Heart left ventricle (tissue), 16 donors: ENCODE measurements at regions of chr2 and their contacts with region 1.

Region 1: DNA sequence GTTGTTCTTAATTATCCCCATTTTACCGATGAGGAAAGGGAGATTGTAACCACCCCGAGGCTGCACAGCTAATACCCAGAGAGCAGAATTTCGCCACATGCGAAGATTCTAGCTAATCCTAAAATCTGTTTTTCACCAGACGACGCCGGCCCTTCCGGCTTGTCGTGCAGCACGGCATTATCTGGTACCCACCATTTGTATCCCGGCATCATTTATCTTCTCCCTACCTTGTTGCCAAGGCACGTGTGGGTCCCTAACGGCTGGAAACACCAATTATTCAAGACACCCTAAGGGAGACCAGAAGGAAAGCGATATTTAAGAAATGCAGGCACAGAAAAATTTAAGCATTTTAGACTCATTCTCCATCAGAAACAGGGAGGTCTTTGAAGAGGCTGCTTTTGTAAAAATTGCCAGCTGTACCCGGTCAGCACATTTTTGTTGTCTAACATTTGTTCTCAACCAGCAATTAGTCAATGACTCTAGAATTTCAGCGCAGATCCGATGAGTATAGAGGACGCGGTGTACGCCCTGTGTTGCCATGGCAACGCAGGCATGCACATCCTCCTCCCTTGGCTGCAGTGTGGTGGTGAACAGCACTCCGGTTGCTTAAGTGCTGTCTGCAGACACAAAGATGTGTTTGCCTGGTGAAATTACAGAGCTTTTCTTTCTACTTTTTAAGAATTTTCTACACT is 111.6 kb downstream of the AGAP1 start:
- DNase-seq: peak; percentile 67 to 90 (median 82)
- ATAC-seq: peak; percentile 81 to 90 (median 88)
- H3K4me3 ChIP-seq: peak overlapping the region in 1 of 12 donors; percentile 2
- H3K27ac ChIP-seq: peak overlapping the region in 3 of 12 donors; percentile 7 to 43 (median 23)
- H3K4me1 ChIP-seq: peaks cover 0 to 36% (median 13%) of the 10 kb centered on the region in 12 donors
- H3K27me3 ChIP-seq: no peaks in the 10 kb centered on the region
- CTCF ChIP-seq: no peak
- POLR2A ChIP-seq: no peak

Region 2: DNA sequence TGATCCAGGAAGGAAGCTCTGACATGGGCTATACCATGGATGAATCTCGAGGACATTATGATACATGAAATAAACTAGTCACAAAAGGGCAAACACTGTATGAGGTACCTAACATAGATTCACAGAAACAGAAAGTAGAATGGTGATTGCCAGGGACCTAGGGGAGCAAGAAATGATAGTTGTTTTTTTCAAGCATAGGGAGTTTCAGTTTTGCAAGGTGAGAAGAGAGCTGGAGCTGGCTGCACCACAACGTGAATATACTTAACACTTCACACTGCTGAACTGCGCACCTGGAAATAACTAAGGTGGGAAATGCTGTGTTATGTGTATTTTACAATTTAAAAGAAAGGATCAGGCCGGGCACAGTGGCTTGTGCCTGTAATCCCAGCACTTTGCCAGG is 124.8 kb before region 1 on chr2:
- intact Hi-C with region 1: no loop called
- DNase-seq: no peak
- ATAC-seq: no peak
- H3K4me3 ChIP-seq: no peak overlapping the region
- H3K27ac ChIP-seq: no peak overlapping the region
- H3K4me1 ChIP-seq: no peaks in the 10 kb centered on the region
- H3K27me3 ChIP-seq: no peaks in the 10 kb centered on the region
- CTCF ChIP-seq: no peak
- POLR2A ChIP-seq: no peak

Region 3: DNA sequence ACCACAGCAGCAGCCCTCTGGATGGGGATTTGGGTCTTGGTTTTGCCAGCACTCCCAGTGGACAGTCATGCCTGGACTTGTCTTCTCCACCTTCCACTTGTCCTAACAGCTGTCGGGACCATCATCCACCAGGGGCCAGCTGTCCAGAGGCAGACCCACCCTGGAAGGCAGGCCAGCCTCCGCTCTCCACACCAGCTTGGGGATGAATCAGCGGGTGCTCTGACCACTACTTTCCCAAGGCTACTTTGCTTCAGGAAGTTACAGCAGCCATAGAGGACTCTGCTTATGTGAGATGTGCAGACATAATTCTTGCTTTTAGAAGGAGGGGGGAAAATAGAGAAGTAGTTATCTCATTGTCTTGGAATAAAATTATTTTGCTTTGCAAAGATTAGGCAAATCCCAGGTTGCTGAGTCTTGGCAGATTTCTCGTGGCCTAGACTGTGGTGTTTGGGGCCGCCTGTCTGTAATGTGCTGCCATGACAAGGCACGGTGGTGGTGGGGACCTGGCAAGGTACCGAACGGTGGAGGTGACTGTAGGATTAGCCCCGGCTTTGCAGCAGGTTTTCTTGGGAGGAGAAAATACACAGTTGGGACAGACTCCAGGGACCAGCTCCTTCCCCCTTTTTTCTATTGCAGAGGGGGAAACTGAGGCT is 37.1 kb after region 1 on chr2:
- intact Hi-C with region 1: loop called in 1 of 10 experiments (anchors 5 kb)
- DNase-seq: peak in 3 of 5 donors; percentile 32 to 80 (median 70)
- ATAC-seq: peak in 3 of 4 donors; percentile 46 to 80 (median 61)
- H3K4me3 ChIP-seq: no peak overlapping the region
- H3K27ac ChIP-seq: peak overlapping the region in 9 of 12 donors; percentile 4 to 89 (median 71)
- H3K4me1 ChIP-seq: peaks cover 7 to 69% (median 42%) of the 10 kb centered on the region in 12 donors
- H3K27me3 ChIP-seq: no peaks in the 10 kb centered on the region
- CTCF ChIP-seq: peak in 10 of 12 donors; percentile 9 to 51 (median 32)
- POLR2A ChIP-seq: no peak

Region 4: DNA sequence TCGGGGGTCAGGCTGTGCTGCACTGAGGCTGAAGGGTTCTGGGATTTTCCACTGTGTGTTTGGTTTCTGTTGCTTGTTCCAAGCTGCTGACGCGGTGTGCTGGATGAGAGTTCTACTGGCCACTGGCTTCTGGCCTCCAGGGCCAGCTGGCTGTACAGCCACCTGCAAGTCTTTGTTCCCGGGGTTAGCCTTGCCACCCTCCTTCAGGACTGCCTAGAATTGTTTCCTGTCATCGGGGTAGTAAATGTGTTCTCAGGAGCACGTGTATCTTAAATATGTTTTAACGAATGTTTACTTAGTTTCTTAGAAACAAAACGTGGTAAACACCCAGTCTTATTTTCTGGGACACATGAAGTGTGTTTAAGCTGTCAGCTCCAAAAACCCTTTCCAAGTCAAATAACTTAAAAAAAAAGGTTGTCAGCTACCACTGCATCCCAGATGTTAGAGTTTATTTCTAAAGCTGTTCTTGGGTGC is 119.6 kb after region 1 on chr2:
- intact Hi-C with region 1: loop called in 1 of 10 experiments (anchors 5 kb)
- DNase-seq: peak; percentile 61 to 79 (median 78)
- ATAC-seq: peak; percentile 70 to 84 (median 78)
- H3K4me3 ChIP-seq: peak overlapping the region in 2 of 12 donors; percentile 14 to 32
- H3K27ac ChIP-seq: peak overlapping the region in 10 of 12 donors; percentile 33 to 90 (median 60)
- H3K4me1 ChIP-seq: peaks cover 0 to 38% (median 20%) of the 10 kb centered on the region in 12 donors
- H3K27me3 ChIP-seq: no peaks in the 10 kb centered on the region
- CTCF ChIP-seq: no peak
- POLR2A ChIP-seq: no peak